Motor neuron (in vitro differentiated cells): ENCODE measurements at regions of chr17 and their contacts with region 1.

Region 1: GRCh38 chr17:11240041-11240801 is 792 bp upstream of the SHISA6 start:
- ATAC-seq: peak in 5 of 8 experiments; percentile 63 to 67 (median 64)
- H3K4me3 ChIP-seq: peak overlapping the region; percentile 60 to 73 (median 71)
- H3K27ac ChIP-seq: peak overlapping the region; percentile 45 to 60
- H3K4me1 ChIP-seq: peaks cover 27 to 42% of the 10 kb centered on the region in 2 donors

Region 2: GRCh38 chr17:10790491-10791401 is 449.5 kb before region 1 on chr17:
- in situ Hi-C with region 1: no loop called
- ATAC-seq: peak in 6 of 8 experiments; percentile 35 to 62 (median 50)
- H3K4me3 ChIP-seq: no peak overlapping the region
- H3K27ac ChIP-seq: no peak overlapping the region
- H3K4me1 ChIP-seq: peaks cover 0 to 7% of the 10 kb centered on the region in 2 donors

Region 3: DNA sequence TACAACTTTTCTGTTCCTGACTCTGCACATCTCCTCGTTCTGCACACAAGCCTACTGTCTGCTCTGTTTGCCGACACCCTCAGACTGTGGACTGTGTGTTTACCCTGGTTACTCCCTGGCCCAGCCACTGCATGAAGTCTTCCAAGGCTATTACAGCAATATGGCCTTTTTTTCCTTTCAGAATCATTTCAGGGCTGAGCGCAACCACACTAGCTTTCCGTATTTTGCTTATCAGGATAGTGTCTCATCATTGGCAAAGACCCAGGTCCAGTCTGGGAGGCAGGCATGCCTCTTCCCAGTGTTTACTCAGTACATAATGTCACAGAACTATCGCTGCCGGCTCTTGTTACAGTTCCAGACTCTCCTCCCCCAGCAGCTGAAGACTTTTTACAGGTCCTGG is 368.2 kb after region 1 on chr17:
- in situ Hi-C with region 1: loop called in 1 of 9 experiments (anchors 25 kb)
- ATAC-seq: peak in 6 of 8 experiments; percentile 36 to 86 (median 70)
- H3K4me3 ChIP-seq: no peak overlapping the region
- H3K27ac ChIP-seq: no peak overlapping the region
- H3K4me1 ChIP-seq: peaks cover 6 to 10% of the 10 kb centered on the region in 2 donors

Region 4: DNA sequence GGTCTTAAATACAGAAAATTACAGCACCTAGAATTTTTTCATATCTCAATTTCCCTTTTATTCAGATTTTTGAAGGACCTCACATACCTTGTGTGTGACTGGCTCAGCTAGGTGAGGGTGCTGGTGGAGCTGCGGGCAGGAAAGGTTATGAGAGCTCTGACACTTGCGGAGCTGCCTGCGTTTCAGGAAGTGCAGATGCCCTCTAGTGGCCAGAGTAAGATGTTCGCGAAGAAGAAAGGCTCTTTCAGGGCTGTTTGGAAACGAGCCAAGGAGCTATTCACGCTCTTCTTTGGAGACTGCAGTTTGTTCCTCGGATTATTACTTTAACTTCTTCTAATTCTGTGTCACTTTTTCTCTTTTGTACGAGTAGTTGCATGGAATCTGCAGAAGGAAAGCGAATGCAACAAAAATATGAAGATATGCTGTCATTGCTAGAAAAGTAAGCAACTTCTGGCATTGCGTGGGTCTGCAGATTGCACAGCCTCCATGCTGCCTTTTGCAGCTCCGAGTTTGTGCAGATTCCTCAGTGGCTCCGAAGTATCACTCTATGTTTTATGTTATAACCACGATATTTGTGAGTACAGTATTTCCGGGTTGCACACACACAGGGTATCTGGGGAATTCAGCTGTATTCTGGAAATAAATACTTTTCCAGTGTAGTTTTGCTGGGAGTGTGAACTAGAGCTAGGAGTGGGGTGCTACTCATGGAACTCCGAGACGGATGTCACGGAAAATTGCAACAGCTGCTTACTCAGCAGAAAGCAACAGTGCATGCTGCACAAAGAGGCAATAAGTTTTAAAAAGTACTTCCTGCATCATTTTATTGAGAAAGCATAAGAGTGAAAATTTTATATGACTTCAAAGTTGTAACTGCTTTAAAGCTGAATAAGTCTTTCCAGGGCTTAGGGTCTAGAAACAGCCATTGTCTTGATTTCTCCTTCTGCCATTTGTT is 404.3 kb after region 1 on chr17:
- in situ Hi-C with region 1: loop called in 1 of 9 experiments (anchors 25 kb)
- ATAC-seq: peak in 6 of 8 experiments; percentile 55 to 89 (median 83)
- H3K4me3 ChIP-seq: no peak overlapping the region
- H3K27ac ChIP-seq: no peak overlapping the region
- H3K4me1 ChIP-seq: peaks cover 17% of the 10 kb centered on the region in 2 donors